Left colon (tissue), 2 donors: ENCODE measurements at regions of chr17 and their contacts with region 1.

Region 1: DNA sequence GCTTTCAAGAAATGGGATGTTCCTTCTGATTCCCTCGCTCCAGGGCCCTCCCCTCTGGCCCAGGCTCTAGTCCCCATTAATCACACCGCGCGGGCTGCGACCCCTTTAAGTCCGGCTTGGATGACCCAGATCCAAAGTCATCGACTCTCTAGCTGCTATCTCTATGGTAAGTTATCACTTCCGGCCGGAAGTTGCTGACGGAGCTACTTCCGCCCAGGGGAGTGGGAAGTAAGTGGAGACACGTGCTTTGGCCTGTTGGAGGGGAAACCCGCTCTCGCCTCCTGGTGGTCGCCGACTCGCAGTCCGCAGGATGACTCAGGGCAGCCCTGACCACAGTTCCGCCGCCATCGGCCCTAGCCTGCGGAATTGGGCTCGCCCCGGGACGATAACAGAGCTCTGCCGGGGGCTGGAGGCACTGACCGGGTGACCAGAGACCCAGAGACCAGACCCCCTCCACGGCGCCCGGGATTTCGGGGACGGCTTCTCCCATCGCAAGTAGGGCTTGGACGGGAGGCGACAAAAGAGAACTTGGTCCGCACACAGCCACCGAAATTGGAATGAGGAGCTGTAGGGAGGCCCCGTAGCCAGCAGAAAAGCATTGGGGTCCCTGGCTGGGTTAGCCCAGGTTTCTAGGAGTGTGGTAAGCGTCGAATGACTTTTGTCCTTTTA is 52.2 kb upstream of the SEC14L1 start:
- DNase-seq: peak; percentile 92 to 94
- ATAC-seq: peak; percentile 95

Region 2: DNA sequence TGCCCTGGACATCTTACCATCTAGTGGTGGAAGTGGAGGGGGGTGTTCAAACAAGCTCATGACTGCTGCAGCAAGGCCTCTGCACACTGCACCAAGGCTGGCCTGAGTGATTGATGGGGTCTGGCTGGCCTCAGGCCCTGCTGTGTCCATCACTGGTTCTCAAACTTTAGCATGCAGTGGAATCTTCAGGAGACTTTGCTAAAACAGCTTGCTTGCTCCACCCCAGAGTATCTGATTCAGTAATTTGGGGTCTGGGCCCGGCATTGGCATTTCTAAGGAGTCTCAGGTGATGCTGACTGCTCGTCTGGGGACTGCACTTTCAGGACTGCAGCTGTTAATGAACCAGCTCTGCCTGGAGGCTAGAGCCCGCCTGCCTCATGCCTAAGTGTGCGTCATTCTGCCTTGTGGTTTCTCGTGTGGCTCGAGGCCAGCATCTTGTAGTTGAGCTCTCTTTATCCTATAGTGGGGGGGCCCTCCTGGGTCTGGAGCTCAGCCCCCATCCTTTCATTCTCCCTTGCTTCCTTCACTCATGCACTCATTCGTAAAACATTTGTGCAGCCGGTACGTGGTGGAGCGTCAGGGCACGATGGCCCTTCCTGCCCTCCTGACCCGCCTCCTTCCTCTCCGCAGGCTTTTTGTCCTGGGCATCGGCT is 216.2 kb before region 1 on chr17:
- intact Hi-C with region 1: no loop called
- DNase-seq: peak in 1 of 2 donors; percentile 13
- ATAC-seq: no peak

Region 3: DNA sequence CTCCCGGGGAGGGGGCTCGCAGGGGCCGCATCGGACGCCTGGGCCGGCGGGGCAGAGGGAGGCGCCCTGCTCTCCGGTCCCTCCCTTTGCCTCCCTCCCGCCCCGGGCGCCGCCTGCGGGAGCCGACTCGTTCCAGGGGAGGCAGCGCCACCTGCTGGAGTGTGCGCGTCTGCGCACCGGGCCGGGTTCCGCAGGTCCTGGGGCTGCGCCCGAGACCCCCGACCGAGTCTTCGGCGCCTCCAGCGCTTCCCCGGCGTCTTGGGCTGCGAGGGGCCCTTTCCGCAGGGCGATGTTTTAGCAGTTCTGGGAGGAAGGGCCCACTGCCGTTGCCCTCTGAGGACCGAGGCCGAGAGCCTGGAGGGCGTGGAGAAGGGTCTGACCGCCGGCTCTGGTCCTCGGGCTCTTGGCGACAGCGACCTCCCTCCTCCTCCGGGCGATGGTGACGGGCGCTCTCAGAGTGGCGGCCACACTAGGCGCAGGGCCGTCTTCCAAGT is 158.5 kb after region 1 on chr17:
- intact Hi-C with region 1: loop called (anchors 5 to 10 kb)
- DNase-seq: peak; percentile 71 to 90
- ATAC-seq: peak; percentile 94